Panc1 (cell line): ENCODE measurements at regions of chr11 and their contacts with region 1.

Region 1: GRCh38 chr11:103601225-103601846 is 435.1 kb upstream of the DDI1 start:
- DNase-seq: peak; percentile 24
- ATAC-seq: peak; percentile 92
- H3K4me3 ChIP-seq: no peak overlapping the region
- H3K27ac ChIP-seq: no peak overlapping the region
- H3K4me1 ChIP-seq: no peaks in the 10 kb centered on the region
- H3K27me3 ChIP-seq: peaks cover 3% of the 10 kb centered on the region
- CTCF ChIP-seq: peak; percentile 92

Region 2: DNA sequence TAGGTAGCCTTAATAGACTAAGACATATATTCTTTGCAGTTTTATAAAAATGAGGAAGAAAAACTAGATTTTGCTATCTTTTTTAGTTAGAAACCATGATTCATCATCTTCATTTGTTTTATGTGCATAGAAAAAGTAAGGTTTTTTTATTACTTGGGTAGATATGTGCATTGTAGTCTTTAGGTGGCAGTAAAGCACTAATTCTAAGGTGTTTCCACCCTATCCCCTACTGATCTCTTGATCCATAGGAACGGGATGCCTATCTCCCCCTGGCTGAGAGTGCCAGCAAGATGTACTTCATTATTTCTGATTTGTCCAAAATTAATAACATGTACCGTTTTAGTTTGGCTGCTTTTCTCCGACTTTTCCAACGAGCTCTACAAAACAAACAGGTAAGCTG is 344.0 kb before region 1 on chr11:
- CTCF ChIA-PET with region 1: interaction called, 3 read pairs
- POLR2A ChIA-PET with region 1: no interaction called
- in situ Hi-C with region 1: no loop called
- intact Hi-C with region 1: loop called (anchors 5 kb)
- DNase-seq: peak; percentile 12
- ATAC-seq: peak; percentile 83
- H3K4me3 ChIP-seq: no peak overlapping the region
- H3K27ac ChIP-seq: no peak overlapping the region
- H3K4me1 ChIP-seq: no peaks in the 10 kb centered on the region
- H3K27me3 ChIP-seq: no peaks in the 10 kb centered on the region
- CTCF ChIP-seq: peak; percentile 59

Region 3: DNA sequence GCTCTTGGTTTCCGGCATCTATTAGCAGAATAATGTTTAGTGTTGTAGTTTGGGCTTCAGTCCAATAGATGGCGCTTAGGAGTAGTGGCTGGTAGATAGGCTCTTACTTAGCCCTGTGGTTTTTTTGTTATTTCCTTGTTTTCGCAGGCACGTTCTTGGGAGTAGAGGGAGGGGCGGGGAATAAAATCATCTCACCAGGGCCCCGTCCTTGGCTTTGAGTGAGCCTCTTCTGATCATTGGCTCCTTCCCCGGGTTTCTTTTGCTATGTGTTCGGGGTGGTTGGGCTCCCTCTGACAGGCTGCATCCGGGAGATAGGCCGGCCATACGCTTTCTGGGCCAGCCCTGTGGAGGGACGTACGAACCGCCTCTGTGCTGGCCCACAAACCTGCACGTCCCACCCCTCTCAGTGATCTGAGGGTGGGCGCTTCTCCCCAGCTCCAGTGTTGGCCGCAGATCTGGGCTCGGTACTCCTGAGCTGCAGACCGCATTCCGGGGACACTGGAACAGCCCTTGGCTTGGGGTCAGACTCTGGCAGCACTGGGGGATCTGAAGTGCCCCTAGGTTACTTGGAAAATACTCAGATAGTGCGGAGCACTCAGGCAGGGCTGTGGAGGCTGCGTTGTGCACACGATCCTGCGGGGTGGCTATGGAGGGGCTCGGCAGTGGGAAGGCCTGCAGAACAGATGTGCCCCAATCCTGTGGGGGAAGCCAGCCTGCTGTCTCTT is 275.1 kb before region 1 on chr11:
- CTCF ChIA-PET with region 1: no interaction called
- POLR2A ChIA-PET with region 1: no interaction called
- in situ Hi-C with region 1: no loop called
- intact Hi-C with region 1: loop called (anchors 1 kb)
- DNase-seq: peak; percentile 48
- ATAC-seq: peak; percentile 91
- H3K4me3 ChIP-seq: no peak overlapping the region
- H3K27ac ChIP-seq: no peak overlapping the region
- H3K4me1 ChIP-seq: no peaks in the 10 kb centered on the region
- H3K27me3 ChIP-seq: no peaks in the 10 kb centered on the region
- CTCF ChIP-seq: peak; percentile 93